AG04450 (cell line): ENCODE measurements at regions of chr19 and their contacts with region 1.

Region 1: DNA sequence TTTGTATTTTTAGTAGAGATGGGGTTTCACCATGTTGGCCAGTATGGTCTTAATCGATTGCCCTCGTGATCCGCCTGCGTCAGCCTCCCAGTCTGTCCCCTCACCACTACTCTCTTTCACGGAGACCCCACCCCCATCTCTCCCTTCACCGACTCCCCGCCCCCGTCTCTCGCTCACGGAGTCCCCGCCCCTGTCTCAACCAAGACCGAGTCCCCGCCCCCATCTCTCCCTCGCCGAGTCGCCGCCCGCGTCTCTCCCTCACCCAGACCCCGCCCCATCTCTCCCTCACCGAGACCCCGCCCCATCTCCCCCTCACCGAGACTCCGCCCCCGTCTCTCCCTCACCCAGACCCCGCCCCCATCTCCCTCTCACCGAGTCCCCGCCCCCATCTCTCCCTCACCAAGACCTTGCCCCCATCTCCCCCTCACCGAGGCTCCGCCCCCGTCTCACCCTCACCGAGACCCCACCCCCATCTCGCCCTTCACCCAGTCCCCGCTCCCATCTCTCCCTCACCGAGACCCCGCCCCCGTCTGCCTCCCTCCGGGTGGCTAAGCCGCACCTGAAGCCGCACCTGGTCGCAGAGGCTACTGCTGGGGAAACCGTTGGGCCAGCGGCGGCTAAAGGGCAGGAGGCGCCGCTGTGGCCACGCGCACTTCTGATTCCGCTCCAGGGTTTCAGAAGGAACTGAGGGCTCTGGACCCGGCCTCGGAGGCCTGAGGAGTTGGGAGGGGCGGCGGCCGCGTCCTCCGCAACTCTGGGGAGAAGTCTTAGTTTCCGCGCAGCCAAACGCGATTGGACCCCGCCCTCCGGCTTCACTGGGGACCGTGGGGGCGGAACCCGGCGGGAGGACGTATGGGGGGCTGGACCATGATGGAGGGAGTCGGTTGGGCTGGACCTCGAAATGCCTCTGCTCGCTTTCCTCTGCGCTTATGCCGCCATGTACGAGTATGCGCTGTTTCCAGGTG is 17.1 kb upstream of the ZNF846 start:
- DNase-seq: peak; percentile 91
- H3K4me3 ChIP-seq: peak overlapping the region; percentile 85
- H3K27ac ChIP-seq: peak overlapping the region; percentile 91
- H3K27me3 ChIP-seq: no peaks in the 10 kb centered on the region
- CTCF ChIP-seq: no peak

Region 2: DNA sequence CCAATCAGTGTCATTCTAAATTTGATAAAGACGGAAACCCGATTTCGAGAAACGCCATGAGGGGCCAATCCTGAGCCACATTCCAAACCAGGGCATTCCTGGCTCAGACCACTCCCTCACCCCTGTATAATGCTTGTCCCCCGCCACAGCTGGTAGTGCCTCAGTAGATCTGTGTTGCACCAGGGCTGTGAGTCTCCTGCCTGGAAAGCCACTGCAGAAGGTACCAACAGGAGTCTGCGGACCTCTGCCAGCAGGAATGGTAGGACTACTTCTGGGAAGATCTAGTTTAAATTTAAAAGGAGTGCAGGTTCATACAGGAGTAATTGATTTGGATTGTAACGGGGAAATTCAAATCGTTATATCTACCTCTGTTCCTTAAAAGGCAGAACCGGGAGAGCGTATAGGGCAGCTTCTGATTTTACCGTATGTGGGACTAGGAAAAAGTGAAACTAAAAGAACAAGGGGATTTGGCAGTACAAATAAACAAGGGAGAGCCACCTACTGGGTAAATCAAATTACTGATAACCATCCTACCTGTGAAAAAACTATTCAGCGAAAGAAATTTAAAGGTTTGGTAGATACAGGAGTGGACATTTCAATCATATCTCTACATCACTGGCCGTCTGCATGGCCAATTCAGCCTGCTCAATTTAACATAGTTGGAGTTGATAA is 329.5 kb before region 1 on chr19:
- CTCF ChIA-PET with region 1: no interaction called
- POLR2A ChIA-PET with region 1: interaction called, 10 read pairs
- DNase-seq: no peak
- H3K4me3 ChIP-seq: no peak overlapping the region
- H3K27ac ChIP-seq: no peak overlapping the region
- H3K27me3 ChIP-seq: no peaks in the 10 kb centered on the region
- CTCF ChIP-seq: no peak

Region 3: GRCh38 chr19:10018263-10018662 is 232.6 kb after region 1 on chr19:
- CTCF ChIA-PET with region 1: no interaction called
- POLR2A ChIA-PET with region 1: interaction called, 13 read pairs
- DNase-seq: no peak
- H3K4me3 ChIP-seq: no peak overlapping the region
- H3K27ac ChIP-seq: no peak overlapping the region
- H3K27me3 ChIP-seq: no peaks in the 10 kb centered on the region
- CTCF ChIP-seq: no peak